ENCODE measurements at regions of chr3 and their contacts with region 1.

Region 1: GRCh38 chr3:15377961-15378791 is 45.8 kb upstream of the SH3BP5 start:
- DNase-seq: peak; percentile 96

Region 2: GRCh38 chr3:15108082-15108545 is 270.1 kb before region 1 on chr3:
- intact Hi-C with region 1: loop called (anchors 5 kb)
- DNase-seq: peak; percentile 90

Region 3: DNA sequence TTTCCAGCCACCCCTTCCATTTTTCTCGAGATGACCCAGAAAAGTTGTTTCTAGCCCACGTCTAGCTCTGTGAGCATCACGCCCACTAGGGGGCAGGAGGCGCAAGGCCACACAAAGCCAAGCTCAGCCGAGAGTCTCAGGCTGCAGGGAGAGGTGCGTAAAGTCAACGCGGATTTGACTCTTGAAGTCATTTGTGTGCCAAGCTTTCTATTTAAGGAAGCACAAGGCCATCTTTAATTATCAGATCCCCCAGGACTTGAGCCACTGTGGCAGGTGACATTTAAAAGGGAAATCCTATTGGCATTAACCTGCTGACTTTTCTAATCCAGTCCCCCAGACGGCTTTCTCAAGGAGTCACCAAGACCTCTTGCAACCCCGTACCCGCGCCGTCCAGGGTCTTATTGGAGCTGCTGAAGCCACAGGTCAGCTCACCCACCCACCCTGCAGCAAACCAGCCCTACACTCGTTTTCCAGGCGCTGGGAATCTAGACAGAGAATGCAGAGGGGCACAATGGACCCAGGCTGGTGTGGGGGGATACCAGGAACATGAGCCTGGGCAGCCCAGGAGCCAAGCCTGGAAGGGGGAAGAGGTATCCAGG is 110.0 kb before region 1 on chr3:
- intact Hi-C with region 1: loop called (anchors 1 kb)
- DNase-seq: peak; percentile 94

Region 4: DNA sequence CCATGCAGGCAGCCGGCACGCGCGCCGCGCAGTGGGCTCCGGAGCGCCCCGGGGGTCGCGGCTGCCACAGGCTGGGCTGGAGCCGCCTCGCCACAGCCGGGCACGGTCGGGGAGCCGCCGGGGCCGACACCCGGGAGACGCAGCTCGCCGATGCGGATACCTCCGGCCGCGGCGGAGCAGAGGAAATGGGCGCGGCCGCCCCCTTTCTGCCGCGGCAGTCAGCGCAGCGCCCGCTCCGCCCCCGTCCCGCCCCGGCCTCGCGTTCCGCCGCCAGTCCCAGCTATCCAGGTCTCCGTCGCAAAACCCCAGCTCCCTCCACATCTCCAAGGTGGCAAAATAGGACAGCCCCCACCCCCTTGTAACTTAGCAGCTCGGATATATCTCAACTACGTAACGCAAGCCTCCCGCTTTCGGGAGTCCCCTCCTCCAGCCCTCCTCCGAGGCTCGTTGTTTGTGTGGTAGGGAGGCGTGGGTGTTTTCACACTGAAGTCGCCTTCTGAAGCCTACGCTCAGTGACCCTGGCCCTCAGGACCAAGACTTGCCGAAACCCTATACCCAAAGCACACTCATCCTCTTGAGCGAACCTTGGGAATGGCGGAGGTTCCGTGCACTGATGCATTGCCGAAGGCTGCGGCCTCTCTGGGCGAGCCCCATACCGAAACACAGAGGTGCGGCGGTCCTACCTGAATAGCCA is 45.6 kb before region 1 on chr3 and contains the start of gene SH3BP5:
- intact Hi-C with region 1: loop called (anchors 2 kb)
- DNase-seq: peak; percentile 90
- total RNA-seq, gene SH3BP5: 11.4 TPM

Measured in cardiac septum (tissue), 1 donor.